Right cardiac atrium (tissue), 5 donors: ENCODE measurements at regions of chr11 and their contacts with region 1.

Region 1: GRCh38 chr11:46238967-46239800 is 38.3 kb upstream of the CREB3L1 start:
- DNase-seq: peak; percentile 86 to 96 (median 95)
- ATAC-seq: peak; percentile 87 to 89
- H3K4me3 ChIP-seq: peak overlapping the region; percentile 41
- H3K27ac ChIP-seq: peak overlapping the region; percentile 93
- H3K4me1 ChIP-seq: peaks cover 8% of the 10 kb centered on the region
- H3K27me3 ChIP-seq: no peaks in the 10 kb centered on the region

Region 2: GRCh38 chr11:46295312-46296058 is 56.3 kb after region 1 on chr11:
- intact Hi-C with region 1: loop called in 1 of 4 experiments (anchors 5 kb)
- DNase-seq: peak; percentile 83 to 93 (median 92)
- ATAC-seq: peak; percentile 92 to 93
- H3K4me3 ChIP-seq: peak overlapping the region; percentile 51
- H3K27ac ChIP-seq: no peak overlapping the region
- H3K4me1 ChIP-seq: peaks cover 3% of the 10 kb centered on the region
- H3K27me3 ChIP-seq: no peaks in the 10 kb centered on the region